Common myeloid progenitor, CD34-positive (primary cell): ENCODE measurements at regions of chr2 and their contacts with region 1.

Region 1: DNA sequence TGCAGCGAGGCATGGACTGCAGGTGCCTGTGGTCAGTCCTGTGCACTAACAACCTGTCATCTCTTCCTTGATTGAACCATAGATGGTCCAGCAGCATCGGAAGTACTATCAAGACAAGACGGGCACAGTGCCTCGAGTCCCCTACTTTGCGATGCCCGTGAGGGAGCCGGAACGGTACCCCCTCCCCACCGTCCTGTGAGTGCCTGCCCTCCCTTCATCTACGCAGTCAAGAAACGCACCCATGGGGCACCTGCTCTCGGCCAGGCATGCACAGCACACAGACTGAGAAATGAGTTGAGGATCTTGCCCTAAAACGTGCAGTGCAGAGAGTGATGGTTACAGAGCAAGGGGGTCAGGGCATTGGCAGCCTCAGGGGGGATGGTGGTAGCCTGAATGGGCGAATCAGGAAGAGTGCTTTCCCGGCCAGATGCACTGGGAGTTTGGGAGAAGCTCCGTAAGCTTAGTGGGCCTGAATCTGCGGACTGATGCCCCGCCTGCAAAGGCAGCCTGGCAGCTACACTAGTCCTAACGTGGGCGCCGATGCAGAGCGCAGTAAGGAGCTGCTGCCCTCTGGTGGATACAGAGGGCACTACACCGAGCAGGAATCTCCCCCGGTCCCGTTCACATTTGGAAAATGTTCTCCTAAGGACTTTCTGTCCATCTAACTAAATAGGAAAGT is 63.6 kb downstream of the CIB4 start:
- DNase-seq: peak; percentile 48 to 66 (median 61)
- H3K4me3 ChIP-seq: no peak overlapping the region
- H3K27ac ChIP-seq: no peak overlapping the region
- H3K4me1 ChIP-seq: no peaks in the 10 kb centered on the region
- H3K27me3 ChIP-seq: peaks cover 0 to 25% (median 16%) of the 10 kb centered on the region in 5 experiments

Region 2: GRCh38 chr2:26422947-26423629 is 154.5 kb before region 1 on chr2:
- CTCF ChIA-PET with region 1: no interaction called
- POLR2A ChIA-PET with region 1: no interaction called
- DNase-seq: no peak
- H3K4me3 ChIP-seq: no peak overlapping the region
- H3K27ac ChIP-seq: no peak overlapping the region
- H3K4me1 ChIP-seq: no peaks in the 10 kb centered on the region
- H3K27me3 ChIP-seq: peaks cover 0 to 3% (median 0%) of the 10 kb centered on the region in 5 experiments

Region 3: DNA sequence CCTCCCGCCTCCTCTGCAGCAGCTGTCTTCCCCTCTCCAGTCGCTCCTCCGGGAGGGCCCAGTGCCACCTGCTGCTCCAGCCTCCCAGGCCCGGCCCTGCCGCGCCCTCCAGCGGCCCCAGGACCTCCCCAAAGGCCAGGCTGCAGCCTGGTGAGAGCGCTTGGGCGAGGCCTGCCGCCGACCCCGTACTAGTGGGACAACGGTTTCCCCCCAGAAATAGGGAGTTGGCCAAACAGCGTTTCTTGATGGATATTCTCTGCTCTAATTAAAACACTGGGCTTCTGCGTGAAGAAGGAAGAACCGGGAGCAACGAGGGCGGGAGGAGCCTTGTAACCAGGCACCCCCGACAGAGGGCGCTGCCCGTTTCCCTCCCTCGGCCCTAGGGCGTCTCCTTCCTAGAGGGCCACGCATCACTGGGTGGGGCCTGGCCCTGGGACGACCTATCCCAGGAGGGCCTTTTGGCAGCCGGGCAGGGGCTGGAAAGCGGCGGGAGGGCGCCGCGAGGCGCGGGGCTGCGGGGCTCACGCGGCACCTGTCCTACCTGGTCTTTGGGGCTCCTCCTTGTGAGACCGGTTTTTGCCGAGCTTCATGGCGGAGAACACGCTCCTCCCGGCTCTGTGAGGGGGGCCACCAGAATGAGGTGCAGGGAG is 74.2 kb before region 1 on chr2:
- CTCF ChIA-PET with region 1: interaction called, 12 read pairs
- POLR2A ChIA-PET with region 1: interaction called, 3 read pairs
- DNase-seq: peak; percentile 79 to 80 (median 79)
- H3K4me3 ChIP-seq: peak overlapping the region in 6 of 7 experiments; percentile 45 to 76 (median 66)
- H3K27ac ChIP-seq: peak overlapping the region in 1 of 2 experiments; percentile 39
- H3K4me1 ChIP-seq: peaks cover 0 to 14% (median 10%) of the 10 kb centered on the region in 4 experiments
- H3K27me3 ChIP-seq: peaks cover 0 to 17% (median 0%) of the 10 kb centered on the region in 5 experiments

Region 4: DNA sequence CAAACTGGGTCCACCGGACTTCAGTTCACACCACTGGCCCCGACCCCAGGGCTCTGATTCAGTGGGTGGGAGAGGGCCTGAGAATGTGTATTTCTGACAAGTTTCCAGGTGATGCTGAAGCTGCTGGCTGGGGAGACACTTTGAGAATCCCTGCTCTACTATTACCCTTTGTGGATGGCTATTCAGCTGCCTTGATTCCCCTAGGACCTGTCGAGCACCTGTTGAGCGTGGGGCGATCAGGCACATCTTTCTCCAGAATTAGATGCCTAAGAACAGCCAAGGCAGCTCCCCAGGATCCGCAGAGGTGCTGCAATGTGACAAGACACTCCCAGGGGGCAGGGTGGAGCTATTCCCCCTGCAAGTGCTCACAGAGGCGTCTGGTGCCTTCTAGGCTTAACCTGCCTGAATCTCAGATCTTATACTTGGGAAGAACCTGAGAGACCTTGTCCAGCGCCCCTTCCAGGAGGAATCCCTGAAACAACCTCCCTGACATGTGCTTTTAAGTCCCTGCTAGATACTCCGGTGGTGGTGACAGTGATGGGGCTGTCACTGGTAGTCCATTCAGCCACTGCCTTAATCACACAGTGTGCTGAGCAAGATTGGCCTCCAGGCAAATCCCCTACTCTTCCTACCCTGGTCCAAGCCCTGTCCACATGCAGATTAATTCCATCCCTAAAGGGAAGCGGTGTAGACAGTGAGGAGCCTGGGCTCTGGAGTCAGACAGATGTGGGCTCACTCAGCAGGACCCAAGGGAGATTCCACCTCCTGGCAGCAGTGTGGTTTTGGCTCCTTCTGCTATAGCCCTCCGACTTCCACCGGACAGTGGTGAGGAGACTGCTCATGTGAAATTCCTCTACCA is 56.3 kb before region 1 on chr2:
- CTCF ChIA-PET with region 1: interaction called, 25 read pairs
- POLR2A ChIA-PET with region 1: no interaction called
- DNase-seq: peak; percentile 38 to 58 (median 51)
- H3K4me3 ChIP-seq: no peak overlapping the region
- H3K27ac ChIP-seq: no peak overlapping the region
- H3K4me1 ChIP-seq: peaks cover 0 to 12% (median 9%) of the 10 kb centered on the region in 4 experiments
- H3K27me3 ChIP-seq: peaks cover 0 to 7% (median 0%) of the 10 kb centered on the region in 5 experiments

Region 5: DNA sequence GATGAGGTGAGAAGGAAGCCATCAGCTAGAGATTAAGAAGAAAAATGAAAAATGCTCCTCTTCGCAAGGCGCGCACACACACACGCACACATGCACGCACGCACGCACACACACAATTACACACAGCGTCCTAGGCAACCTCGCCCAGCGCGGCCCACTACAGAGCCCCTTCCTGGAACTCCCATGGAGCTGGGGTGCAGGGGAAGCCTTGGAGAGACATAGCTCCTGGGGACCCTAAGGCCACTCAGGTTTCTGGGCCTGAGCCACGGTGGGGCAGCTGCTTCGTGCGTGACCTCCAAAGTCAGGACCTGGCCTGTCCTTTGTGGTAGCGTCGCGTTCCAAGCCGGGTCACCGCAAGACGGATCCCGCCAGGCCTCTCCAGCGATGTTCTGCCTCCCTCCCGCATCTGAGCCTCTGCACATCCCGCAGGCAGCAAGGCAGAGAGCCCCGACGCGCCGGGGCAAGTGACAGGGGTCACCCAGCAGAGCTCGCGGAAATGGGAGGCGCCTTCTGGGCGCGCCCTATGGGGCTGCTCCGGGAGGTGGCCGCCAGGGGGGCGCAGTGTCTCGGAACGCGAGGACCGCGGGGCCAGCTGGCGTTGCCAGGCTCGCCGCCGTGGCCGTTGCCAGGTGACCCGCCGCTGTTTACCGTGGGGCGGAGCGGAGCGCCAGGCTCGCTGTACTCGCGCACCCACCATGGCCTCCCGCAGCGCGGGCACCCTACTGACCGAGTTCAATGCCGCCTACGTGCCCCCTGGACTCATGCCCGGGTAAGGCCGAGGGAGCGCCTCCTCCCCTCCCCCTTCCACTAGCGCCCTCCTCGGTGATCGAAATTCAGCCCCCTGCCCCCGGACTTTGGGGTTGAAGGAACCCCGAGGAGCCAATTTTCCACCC is 15.4 kb before region 1 on chr2:
- CTCF ChIA-PET with region 1: interaction called, 75 read pairs
- POLR2A ChIA-PET with region 1: no interaction called
- DNase-seq: peak; percentile 73 to 88 (median 83)
- H3K4me3 ChIP-seq: peak overlapping the region; percentile 3 to 77 (median 65)
- H3K27ac ChIP-seq: no peak overlapping the region
- H3K4me1 ChIP-seq: peaks cover 0 to 20% (median 15%) of the 10 kb centered on the region in 4 experiments
- H3K27me3 ChIP-seq: peaks cover 5 to 83% (median 40%) of the 10 kb centered on the region in 5 experiments

Region 6: GRCh38 chr2:26623541-26624396 is 46.2 kb after region 1 on chr2:
- CTCF ChIA-PET with region 1: no interaction called
- POLR2A ChIA-PET with region 1: no interaction called
- DNase-seq: no peak
- H3K4me3 ChIP-seq: no peak overlapping the region
- H3K27ac ChIP-seq: no peak overlapping the region
- H3K4me1 ChIP-seq: peaks cover 0 to 8% (median 6%) of the 10 kb centered on the region in 4 experiments
- H3K27me3 ChIP-seq: peaks cover 0 to 14% (median 4%) of the 10 kb centered on the region in 5 experiments

Region 7: DNA sequence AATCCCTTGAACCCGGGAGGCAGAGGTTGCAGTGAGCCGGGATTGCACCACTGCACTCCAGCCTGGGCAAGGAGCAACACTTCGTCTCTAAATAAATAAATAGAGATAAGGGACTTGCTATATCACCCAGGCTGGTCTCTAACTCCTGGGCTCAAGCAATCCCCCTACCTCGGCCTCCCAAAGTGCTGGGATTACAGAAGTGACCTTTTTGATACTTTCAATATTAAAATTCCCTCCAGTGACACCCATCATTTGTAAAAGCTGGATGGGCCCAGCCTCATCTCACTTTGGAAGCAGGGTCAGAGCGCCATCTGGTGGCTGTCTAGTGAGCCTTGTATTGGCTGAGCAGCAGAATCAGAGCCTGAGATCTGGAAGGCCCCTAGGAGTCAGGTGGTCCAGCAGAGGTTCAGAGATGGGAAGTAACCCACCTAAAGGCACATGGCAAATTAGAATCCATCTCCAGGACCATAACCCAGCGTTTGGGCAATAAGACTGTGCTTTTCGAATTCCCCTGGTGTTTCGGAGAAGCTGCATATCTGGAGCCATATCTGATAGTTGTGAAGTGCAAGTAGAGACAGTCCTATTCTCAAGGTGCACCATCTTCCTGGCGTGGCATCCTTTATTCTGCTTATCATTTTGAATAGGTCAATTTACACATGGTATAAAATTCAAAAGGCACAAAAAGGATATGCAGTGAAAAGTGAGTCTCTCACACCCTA is 168.2 kb after region 1 on chr2:
- CTCF ChIA-PET with region 1: interaction called, 15 read pairs
- POLR2A ChIA-PET with region 1: no interaction called
- DNase-seq: peak; percentile 83 to 91 (median 87)
- H3K4me3 ChIP-seq: no peak overlapping the region
- H3K27ac ChIP-seq: no peak overlapping the region
- H3K4me1 ChIP-seq: peaks cover 0 to 22% (median 20%) of the 10 kb centered on the region in 4 experiments
- H3K27me3 ChIP-seq: peaks cover 0 to 8% (median 4%) of the 10 kb centered on the region in 5 experiments